Left ventricle myocardium inferior (tissue), 1 donor: ENCODE measurements at regions of chr9 and their contacts with region 1.

Region 1: GRCh38 chr9:13942695-13943094 is 371.2 kb downstream of the NFIB start:
- DNase-seq: no peak
- H3K4me3 ChIP-seq: no peak overlapping the region
- H3K27ac ChIP-seq: peak overlapping the region; percentile 8
- H3K4me1 ChIP-seq: peaks cover 31% of the 10 kb centered on the region
- H3K27me3 ChIP-seq: no peaks in the 10 kb centered on the region
- CTCF ChIP-seq: no peak

Region 2: GRCh38 chr9:14006386-14007187 is 63.9 kb after region 1 on chr9:
- intact Hi-C with region 1: loop called (anchors 10 kb)
- DNase-seq: no peak
- H3K4me3 ChIP-seq: no peak overlapping the region
- H3K27ac ChIP-seq: no peak overlapping the region
- H3K4me1 ChIP-seq: peaks cover 1% of the 10 kb centered on the region
- H3K27me3 ChIP-seq: no peaks in the 10 kb centered on the region
- CTCF ChIP-seq: no peak